ENCODE measurements at regions of chr3 and their contacts with region 1.

Region 1: DNA sequence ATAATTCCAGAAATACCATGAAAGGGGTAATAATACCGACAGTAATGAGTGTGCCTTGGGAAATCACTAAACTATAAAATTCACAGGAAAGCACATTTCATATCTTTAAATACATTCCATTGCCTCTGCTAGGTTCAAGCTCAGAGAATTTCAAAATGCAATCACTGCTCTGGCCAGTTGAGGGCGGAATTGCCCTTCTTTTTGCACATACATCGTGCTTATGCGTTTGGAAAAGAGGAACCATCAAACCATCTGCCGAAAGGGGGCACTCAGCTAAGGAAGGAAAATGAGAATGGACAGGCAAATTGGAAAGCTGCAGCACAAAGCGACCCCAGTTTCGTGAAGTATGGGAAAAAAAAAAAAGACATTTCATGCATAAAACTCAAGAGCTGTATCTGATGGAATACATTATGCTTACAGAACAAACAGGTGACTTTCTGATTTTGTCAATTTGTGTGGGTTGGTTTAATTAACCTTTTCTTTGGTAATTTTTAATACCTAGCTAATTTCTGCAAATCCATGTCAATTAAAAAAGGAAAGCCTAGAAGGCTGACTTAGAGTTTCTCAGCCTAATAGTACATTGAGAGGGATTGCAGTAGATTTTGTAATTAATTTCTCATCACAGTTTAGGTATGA is 61.4 kb downstream of the TUSC7 start:
- DNase-seq: peak; percentile 55
- H3K4me3 ChIP-seq: peak overlapping the region in 1 of 2 experiments; percentile 55; a peak in 1 of 4 replicates
- H3K27ac ChIP-seq: peak overlapping the region in 1 of 2 experiments; percentile 43; a peak in 1 of 4 replicates
- H3K4me1 ChIP-seq: no peaks in the 10 kb centered on the region; a peak in 2 of 4 replicates
- H3K27me3 ChIP-seq: no peaks in the 10 kb centered on the region
- CTCF ChIP-seq: peak; percentile 99
- EP300 ChIP-seq: no peak
- RAD21 ChIP-seq: peak; percentile 99

Region 2: GRCh38 chr3:116453666-116454346 is 317.1 kb before region 1 on chr3:
- CTCF ChIA-PET with region 1: no interaction called
- POLR2A ChIA-PET with region 1: no interaction called
- DNase-seq: no peak
- H3K4me3 ChIP-seq: no peak overlapping the region
- H3K27ac ChIP-seq: no peak overlapping the region; a peak in 1 of 4 replicates
- H3K4me1 ChIP-seq: no peaks in the 10 kb centered on the region; a peak in 1 of 4 replicates
- H3K27me3 ChIP-seq: no peaks in the 10 kb centered on the region
- CTCF ChIP-seq: peak; percentile 71
- EP300 ChIP-seq: no peak
- RAD21 ChIP-seq: peak; percentile 59

Region 3: GRCh38 chr3:116757315-116757714 is 13.6 kb before region 1 on chr3:
- CTCF ChIA-PET with region 1: interaction called, 19 read pairs
- POLR2A ChIA-PET with region 1: no interaction called
- DNase-seq: no peak
- H3K4me3 ChIP-seq: no peak overlapping the region
- H3K27ac ChIP-seq: no peak overlapping the region
- H3K4me1 ChIP-seq: peaks cover 2 to 4% of the 10 kb centered on the region in 2 experiments; a peak in 1 of 4 replicates
- H3K27me3 ChIP-seq: no peaks in the 10 kb centered on the region
- CTCF ChIP-seq: no peak
- EP300 ChIP-seq: no peak
- RAD21 ChIP-seq: no peak

Region 4: GRCh38 chr3:116863822-116864589 is 93.1 kb after region 1 on chr3:
- CTCF ChIA-PET with region 1: interaction called, 44 read pairs
- POLR2A ChIA-PET with region 1: no interaction called
- DNase-seq: peak; percentile 21
- H3K4me3 ChIP-seq: peak overlapping the region; percentile 60 to 70
- H3K27ac ChIP-seq: peak overlapping the region in 1 of 2 experiments; percentile 86; a peak in 2 of 4 replicates
- H3K4me1 ChIP-seq: peaks cover 0 to 16% of the 10 kb centered on the region in 2 experiments; a peak in 2 of 4 replicates
- H3K27me3 ChIP-seq: no peaks in the 10 kb centered on the region
- CTCF ChIP-seq: peak; percentile 71
- EP300 ChIP-seq: no peak
- RAD21 ChIP-seq: peak; percentile 94

Region 5: GRCh38 chr3:116974702-116975101 is 203.8 kb after region 1 on chr3:
- CTCF ChIA-PET with region 1: interaction called, 17 read pairs
- POLR2A ChIA-PET with region 1: no interaction called
- DNase-seq: no peak
- H3K4me3 ChIP-seq: no peak overlapping the region
- H3K27ac ChIP-seq: no peak overlapping the region
- H3K4me1 ChIP-seq: peaks cover 0 to 18% of the 10 kb centered on the region in 2 experiments; a peak in 2 of 4 replicates
- H3K27me3 ChIP-seq: no peaks in the 10 kb centered on the region
- CTCF ChIP-seq: no peak
- EP300 ChIP-seq: no peak
- RAD21 ChIP-seq: no peak

Region 6: GRCh38 chr3:117019082-117019713 is 248.3 kb after region 1 on chr3:
- CTCF ChIA-PET with region 1: interaction called, 11 read pairs
- POLR2A ChIA-PET with region 1: no interaction called
- DNase-seq: peak; percentile 60
- H3K4me3 ChIP-seq: peak overlapping the region in 1 of 2 experiments; percentile 51; a peak in 2 of 4 replicates
- H3K27ac ChIP-seq: peak overlapping the region in 1 of 2 experiments; percentile 86; a peak in 2 of 4 replicates
- H3K4me1 ChIP-seq: peaks cover 0 to 27% of the 10 kb centered on the region in 2 experiments; a peak in 2 of 4 replicates
- H3K27me3 ChIP-seq: no peaks in the 10 kb centered on the region
- CTCF ChIP-seq: peak; percentile 92
- EP300 ChIP-seq: 0 out of 4 replicates have a peak, but pooled peaks of 1 of the 2 experiments have one; percentile 28
- RAD21 ChIP-seq: peak; percentile 98

Region 7: DNA sequence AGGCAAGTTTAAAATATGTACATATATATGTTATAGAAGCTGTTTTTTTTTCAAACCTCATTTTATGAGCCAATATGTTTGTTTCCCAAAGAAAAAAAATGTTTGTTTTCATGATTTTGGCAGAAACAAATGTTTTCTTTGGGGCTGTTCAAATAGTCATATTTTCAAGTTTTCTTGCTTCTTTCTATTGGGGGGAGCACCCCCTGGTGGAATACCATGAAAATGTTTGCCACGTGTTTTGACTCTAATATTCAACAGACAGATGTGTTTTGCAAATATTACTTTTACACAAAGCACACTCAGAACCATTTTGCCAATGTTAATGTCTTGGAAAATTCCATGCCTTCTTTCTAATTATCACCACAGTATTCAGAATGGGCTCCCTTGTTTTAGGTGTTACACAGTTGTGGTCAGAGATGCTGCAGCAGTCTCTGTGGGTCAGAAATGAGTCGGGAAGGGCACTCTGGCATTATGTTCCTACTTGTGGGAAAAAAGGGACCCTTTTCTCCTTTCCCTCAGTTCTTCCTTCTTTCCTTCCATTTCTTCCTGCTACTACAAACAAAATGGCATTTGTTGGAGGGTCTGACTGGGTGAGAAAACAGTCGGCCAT is 755.6 kb after region 1 on chr3:
- CTCF ChIA-PET with region 1: interaction called, 13 read pairs
- POLR2A ChIA-PET with region 1: no interaction called
- DNase-seq: no peak
- H3K4me3 ChIP-seq: no peak overlapping the region; a peak in 1 of 4 replicates
- H3K27ac ChIP-seq: no peak overlapping the region
- H3K4me1 ChIP-seq: peaks cover 6 to 17% of the 10 kb centered on the region in 2 experiments; a peak in 2 of 4 replicates
- H3K27me3 ChIP-seq: no peaks in the 10 kb centered on the region
- CTCF ChIP-seq: peak; percentile 82
- EP300 ChIP-seq: no peak
- RAD21 ChIP-seq: peak; percentile 81

Region 8: DNA sequence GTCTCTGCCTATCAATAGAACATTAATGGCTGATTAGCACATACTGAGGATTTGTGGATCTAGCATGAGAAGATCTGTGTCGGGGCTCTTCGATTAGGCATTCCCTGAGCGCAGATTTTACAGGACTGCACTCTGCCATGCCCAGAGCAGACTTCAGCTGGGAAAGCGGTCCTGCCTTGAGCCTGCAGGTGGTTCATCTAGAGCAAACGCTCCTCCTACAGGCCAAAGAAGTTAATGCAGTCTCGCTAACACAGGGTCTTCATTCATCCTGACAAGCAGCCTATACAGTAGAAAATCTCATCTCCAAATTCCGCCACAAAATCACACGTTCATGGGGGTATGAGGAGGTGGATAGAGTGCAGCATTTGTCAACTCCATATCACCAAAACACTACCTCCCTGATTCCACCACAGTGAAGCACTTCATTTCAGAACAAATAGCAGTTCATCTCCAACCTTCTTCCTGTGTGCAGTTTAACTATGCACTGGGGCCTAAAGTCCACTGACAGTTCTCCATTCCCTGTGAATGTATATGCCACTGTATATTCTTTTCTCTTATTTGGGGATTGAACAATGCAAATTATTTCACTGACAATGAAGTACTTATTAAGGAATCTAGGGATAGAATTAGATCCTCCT is 1857.9 kb after region 1 on chr3:
- CTCF ChIA-PET with region 1: interaction called, 10 read pairs
- POLR2A ChIA-PET with region 1: no interaction called
- DNase-seq: peak; percentile 66
- H3K4me3 ChIP-seq: no peak overlapping the region; a peak in 1 of 4 replicates
- H3K27ac ChIP-seq: no peak overlapping the region
- H3K4me1 ChIP-seq: peaks cover 0 to 4% of the 10 kb centered on the region in 2 experiments; a peak in 2 of 4 replicates
- H3K27me3 ChIP-seq: no peaks in the 10 kb centered on the region
- CTCF ChIP-seq: peak; percentile 77
- EP300 ChIP-seq: no peak
- RAD21 ChIP-seq: peak; percentile 99